Right ventricle myocardium inferior (tissue), 1 donor: ENCODE measurements at regions of chr17 and their contacts with region 1.

Region 1: GRCh38 chr17:31216053-31216751 is 80.8 kb downstream of the OMG start:
- DNase-seq: no peak
- ATAC-seq: no peak

Region 2: DNA sequence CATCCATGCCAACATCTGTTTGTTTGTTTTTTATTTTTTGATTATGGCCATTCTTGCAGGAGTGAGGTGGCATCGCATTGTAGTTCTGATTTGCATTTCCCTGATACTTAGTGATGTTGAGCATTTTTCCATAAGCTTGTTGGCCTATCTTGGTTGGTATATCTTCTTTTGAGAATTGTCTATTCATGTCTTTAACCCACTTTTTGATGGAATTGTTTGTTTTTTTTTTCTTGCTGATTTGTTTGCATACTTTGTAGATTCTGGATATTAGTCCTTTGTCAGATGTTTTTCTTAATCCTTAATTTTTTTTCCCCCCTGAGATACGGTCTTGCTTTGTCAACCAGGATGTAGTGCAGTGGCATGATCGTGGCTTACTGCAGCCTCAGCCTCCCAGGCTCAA is 202.4 kb before region 1 on chr17:
- intact Hi-C with region 1: loop called (anchors 2 kb)
- DNase-seq: no peak
- ATAC-seq: no peak